GM12878 (cell line): ENCODE measurements at regions of chr15 and their contacts with region 1.

Region 1: GRCh38 chr15:83928392-83928734 is 274.4 kb downstream of the ADAMTSL3 start:
- DNase-seq: peak; percentile 84
- ATAC-seq: peak; percentile 90
- H3K4me3 ChIP-seq: peak overlapping the region; percentile 31; the same call in 1 of the 2 replicates
- H3K27ac ChIP-seq: peak overlapping the region; percentile 99
- H3K4me1 ChIP-seq: peaks cover 36% of the 10 kb centered on the region
- H3K27me3 ChIP-seq: no peaks in the 10 kb centered on the region
- CTCF ChIP-seq: no peak
- EP300 ChIP-seq: peak; percentile 14 to 63; a peak in 2 of 4 replicates
- POLR2A ChIP-seq: no peak
- RAD21 ChIP-seq: no peak

Region 2: GRCh38 chr15:83943849-83944404 is 15.6 kb after region 1 on chr15:
- CTCF ChIA-PET with region 1: interaction called, 5 read pairs
- POLR2A ChIA-PET with region 1: interaction called, 5 read pairs
- RAD21 ChIA-PET with region 1: no interaction called
- SMC1A ChIA-PET with region 1: interaction called, 12 read pairs
- in situ Hi-C with region 1: no loop called
- intact Hi-C with region 1: no loop called
- DNase-seq: no peak
- ATAC-seq: no peak
- H3K4me3 ChIP-seq: no peak overlapping the region
- H3K27ac ChIP-seq: no peak overlapping the region
- H3K4me1 ChIP-seq: peaks cover 5% of the 10 kb centered on the region
- H3K27me3 ChIP-seq: no peaks in the 10 kb centered on the region
- CTCF ChIP-seq: no peak
- EP300 ChIP-seq: no peak
- POLR2A ChIP-seq: no peak
- RAD21 ChIP-seq: no peak

Region 3: DNA sequence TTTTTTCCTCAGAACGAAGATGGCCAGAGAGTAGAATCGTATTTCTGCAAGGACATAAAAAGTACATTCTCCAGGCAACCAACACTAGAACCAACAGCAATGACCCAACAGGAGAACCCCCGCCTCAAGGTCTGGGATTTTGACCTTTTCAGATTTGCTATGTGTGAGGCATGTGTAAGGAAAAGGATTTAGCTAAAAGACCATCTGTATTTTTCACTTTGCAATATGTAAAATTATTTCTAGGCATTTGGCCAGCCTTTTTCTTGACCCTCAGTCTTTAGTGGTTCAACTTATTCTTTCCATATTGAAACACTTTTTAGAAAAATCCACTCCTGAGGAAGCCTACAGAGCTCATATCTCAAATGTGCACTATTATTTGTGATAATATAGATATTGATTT is 88.0 kb after region 1 on chr15:
- CTCF ChIA-PET with region 1: no interaction called
- POLR2A ChIA-PET with region 1: no interaction called
- RAD21 ChIA-PET with region 1: no interaction called
- SMC1A ChIA-PET with region 1: no interaction called
- in situ Hi-C with region 1: no loop called
- intact Hi-C with region 1: no loop called
- DNase-seq: no peak
- ATAC-seq: no peak
- H3K4me3 ChIP-seq: no peak overlapping the region
- H3K27ac ChIP-seq: no peak overlapping the region
- H3K4me1 ChIP-seq: no peaks in the 10 kb centered on the region
- H3K27me3 ChIP-seq: no peaks in the 10 kb centered on the region
- CTCF ChIP-seq: no peak
- EP300 ChIP-seq: no peak
- POLR2A ChIP-seq: no peak
- RAD21 ChIP-seq: no peak